A549 (cell line): ENCODE measurements at regions of chr15 and their contacts with region 1.

Region 1: GRCh38 chr15:66700802-66701421 is 1.1 kb upstream of the SMAD6 start:
- DNase-seq: peak; percentile 92 to 98
- ATAC-seq: peak; percentile 62 to 73
- H3K4me3 ChIP-seq: peak overlapping the region; percentile 90
- H3K27ac ChIP-seq: peak overlapping the region; percentile 95
- H3K4me1 ChIP-seq: peaks cover 35% of the 10 kb centered on the region
- CTCF ChIP-seq: no peak
- EP300 ChIP-seq: peak in 1 of 2 experiments; percentile 58; a peak in 1 of 5 replicates
- POLR2A ChIP-seq: peak; percentile 62
- RAD21 ChIP-seq: peak in 1 of 2 experiments; percentile 26; a peak in 2 of 5 replicates

Region 2: DNA sequence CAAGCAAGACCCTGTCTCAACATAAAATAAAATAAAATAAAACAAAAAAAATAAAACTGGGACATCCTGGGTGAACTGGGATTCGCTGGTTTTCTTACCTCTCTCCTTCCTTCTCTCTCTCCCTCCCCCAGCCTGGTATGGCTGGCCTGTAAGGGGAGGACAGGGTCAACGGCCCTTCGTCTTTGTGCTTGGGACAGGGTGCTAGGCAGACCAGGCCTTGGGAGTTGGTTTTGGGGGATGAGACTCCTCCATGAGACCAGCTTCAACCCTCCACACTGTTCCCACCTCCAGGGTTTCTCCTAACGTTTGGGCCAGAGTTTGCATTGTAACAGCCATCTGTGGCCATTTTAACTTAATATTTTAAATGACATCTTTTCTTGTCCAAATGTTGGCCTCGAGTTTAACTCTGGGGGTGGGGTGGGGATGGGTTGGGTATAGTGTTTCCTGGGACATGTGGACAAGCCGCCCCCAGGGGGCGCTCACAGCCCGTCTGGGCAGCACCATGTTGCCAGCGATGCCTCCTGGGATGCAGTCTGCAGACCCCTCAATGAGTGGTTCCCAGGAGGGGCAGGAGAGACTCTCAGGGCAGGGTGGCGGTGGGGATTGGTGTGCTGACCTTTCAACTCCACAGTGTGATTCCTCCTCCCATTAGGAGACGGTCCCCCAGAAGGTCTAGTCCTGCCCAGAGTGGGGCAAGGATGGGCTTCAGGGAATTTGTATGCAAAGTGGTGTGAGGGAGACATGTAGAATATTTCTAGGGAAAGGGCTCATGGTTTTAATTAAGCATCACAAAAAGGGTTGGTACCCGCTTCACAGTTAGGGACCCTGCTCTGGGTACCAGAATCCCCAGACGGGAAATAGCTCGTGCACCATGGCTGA is 97.4 kb before region 1 on chr15:
- CTCF ChIA-PET with region 1: interaction called, 14 read pairs
- POLR2A ChIA-PET with region 1: no interaction called
- DNase-seq: peak; percentile 61 to 86
- ATAC-seq: peak; percentile 80 to 97
- H3K4me3 ChIP-seq: no peak overlapping the region
- H3K27ac ChIP-seq: no peak overlapping the region
- H3K4me1 ChIP-seq: no peaks in the 10 kb centered on the region
- CTCF ChIP-seq: peak; percentile 95
- EP300 ChIP-seq: no peak
- POLR2A ChIP-seq: no peak
- RAD21 ChIP-seq: peak; percentile 92

Region 3: DNA sequence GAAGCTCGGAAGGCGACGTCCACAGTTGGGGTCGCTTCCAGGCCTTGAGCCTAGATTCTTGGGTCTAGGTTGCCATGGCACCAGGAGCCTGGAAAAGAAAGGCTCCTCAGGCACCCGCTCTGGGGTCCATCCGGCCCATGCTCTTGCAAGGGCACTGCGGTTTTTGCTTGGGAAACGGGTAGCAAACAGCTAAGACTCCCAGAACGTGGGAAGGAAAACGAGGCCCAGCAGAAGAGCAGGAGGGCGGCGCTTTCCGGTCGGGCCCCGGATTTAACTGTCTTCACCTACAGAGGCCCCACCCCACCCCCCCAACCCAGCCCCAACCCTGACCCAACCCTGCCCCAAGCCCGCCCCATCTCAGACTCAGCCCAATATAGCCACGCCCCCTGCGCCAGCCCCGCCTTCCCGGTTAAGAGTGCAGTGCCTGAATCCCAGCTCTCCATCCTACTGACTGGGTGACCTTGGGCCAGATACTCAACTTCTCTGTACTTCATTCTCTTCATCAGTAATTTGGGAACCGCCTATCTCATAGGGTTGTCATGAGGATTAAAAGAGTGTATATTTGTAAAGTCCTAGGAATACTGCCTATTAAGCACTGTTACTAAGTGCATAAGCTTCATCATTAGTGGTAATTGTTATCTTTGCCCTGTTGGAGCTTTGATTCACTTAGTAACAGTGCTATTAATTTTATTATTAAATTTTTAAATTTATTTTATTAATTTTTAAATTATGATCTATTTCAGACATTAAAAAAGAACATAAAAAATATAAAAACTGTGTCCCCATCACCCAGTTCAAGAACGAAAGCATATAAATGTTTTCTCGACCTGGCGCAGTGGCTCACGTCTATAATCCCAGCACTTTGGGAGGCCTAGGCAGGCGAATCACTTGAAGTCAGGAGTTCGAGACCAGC is 27.2 kb before region 1 on chr15:
- CTCF ChIA-PET with region 1: interaction called, 11 read pairs
- POLR2A ChIA-PET with region 1: no interaction called
- DNase-seq: peak in 1 of 2 experiments; percentile 58
- ATAC-seq: peak; percentile 44 to 84
- H3K4me3 ChIP-seq: no peak overlapping the region
- H3K27ac ChIP-seq: no peak overlapping the region
- H3K4me1 ChIP-seq: no peaks in the 10 kb centered on the region
- CTCF ChIP-seq: no peak
- EP300 ChIP-seq: no peak
- POLR2A ChIP-seq: no peak
- RAD21 ChIP-seq: no peak

Region 4: DNA sequence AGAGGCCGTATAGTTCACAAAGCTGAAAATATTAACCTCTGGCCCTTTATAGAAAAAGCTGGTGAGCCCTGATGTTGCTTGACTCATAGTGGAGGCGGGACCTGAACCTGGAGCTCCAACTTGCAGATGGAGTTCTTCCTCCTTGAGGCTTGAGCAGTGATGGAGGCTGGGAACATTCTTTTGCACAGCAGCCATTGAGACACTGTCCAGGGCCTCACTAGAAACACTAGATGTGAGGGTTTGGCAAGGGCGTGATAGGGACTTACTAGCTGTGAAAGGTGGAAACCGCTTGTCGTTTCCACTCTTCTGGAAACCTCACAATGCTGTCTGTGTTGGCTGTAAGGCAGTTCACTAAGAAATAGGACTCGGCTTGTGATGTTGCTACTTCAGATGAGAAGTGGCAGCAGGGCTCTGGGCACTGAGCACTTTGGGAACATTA is 13.7 kb after region 1 on chr15:
- CTCF ChIA-PET with region 1: interaction called, 182 read pairs
- POLR2A ChIA-PET with region 1: interaction called, 16 read pairs
- DNase-seq: no peak
- ATAC-seq: peak in 1 of 2 experiments; percentile 44; a peak in 3 of 6 replicates
- H3K4me3 ChIP-seq: no peak overlapping the region
- H3K27ac ChIP-seq: peak overlapping the region; percentile 31 to 65; a peak in 5 of 6 replicates
- H3K4me1 ChIP-seq: peaks cover 86% of the 10 kb centered on the region
- CTCF ChIP-seq: no peak
- EP300 ChIP-seq: no peak
- POLR2A ChIP-seq: no peak
- RAD21 ChIP-seq: no peak

Region 5: DNA sequence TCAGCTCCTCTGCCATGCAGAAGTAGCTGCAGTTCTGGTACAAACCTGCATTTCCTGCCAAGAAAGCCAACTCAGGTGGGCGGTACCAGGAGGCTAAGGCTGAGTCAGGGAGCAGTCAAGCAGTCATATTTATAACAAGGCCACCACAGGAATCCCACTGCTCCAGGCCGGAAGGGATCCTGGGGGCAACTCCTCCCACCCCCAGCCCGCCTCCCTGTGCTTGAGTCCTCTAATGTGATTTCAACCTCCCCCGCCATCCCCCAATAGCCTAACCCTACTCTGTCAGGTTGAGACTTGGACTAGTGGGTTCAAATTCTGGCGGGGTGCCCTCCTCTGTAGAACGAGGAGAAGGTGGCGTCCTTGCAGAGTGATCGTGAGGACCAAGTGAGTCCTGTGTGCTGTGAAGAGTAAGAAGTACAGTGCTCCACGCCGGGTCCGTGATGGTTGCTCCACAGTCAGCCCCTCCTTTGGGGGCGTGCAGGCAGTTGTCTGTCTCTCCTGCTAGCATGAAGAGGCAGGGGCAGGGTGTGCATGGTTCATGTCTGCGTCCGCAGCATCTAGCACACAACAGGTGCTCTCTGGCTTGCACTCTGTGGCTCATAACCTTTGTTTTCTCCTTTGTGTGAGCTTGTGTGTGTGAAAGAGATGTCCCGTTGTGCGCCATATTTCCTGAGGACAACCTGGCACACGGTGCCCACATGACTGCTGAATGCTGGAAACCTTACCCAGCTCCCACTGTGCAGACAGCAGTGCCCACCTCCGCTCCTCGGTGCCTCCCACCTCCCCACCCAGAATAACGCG is 79.5 kb after region 1 on chr15:
- CTCF ChIA-PET with region 1: interaction called, 779 read pairs
- POLR2A ChIA-PET with region 1: interaction called, 94 read pairs
- DNase-seq: peak; percentile 44 to 61
- ATAC-seq: peak; percentile 35 to 57; a peak in 4 of 6 replicates
- H3K4me3 ChIP-seq: no peak overlapping the region
- H3K27ac ChIP-seq: peak overlapping the region; percentile 60 to 94
- H3K4me1 ChIP-seq: peaks cover 55% of the 10 kb centered on the region
- CTCF ChIP-seq: no peak
- EP300 ChIP-seq: no peak
- POLR2A ChIP-seq: no peak
- RAD21 ChIP-seq: no peak

Region 6: GRCh38 chr15:66862878-66863335 is 162.0 kb after region 1 on chr15:
- CTCF ChIA-PET with region 1: interaction called, 10 read pairs
- POLR2A ChIA-PET with region 1: no interaction called
- DNase-seq: peak; percentile 87 to 90
- ATAC-seq: peak; percentile 85 to 97
- H3K4me3 ChIP-seq: no peak overlapping the region
- H3K27ac ChIP-seq: peak overlapping the region; percentile 1 to 66; a peak in 4 of 6 replicates
- H3K4me1 ChIP-seq: peaks cover 17% of the 10 kb centered on the region
- CTCF ChIP-seq: peak; percentile 98
- EP300 ChIP-seq: no peak
- POLR2A ChIP-seq: no peak
- RAD21 ChIP-seq: peak; percentile 83 to 87

Region 7: GRCh38 chr15:66894986-66895780 is 194.3 kb after region 1 on chr15:
- CTCF ChIA-PET with region 1: no interaction called
- POLR2A ChIA-PET with region 1: no interaction called
- DNase-seq: no peak
- ATAC-seq: no peak
- H3K4me3 ChIP-seq: no peak overlapping the region
- H3K27ac ChIP-seq: peak overlapping the region in 1 of 2 experiments; percentile 43; a peak in 4 of 6 replicates
- H3K4me1 ChIP-seq: peaks cover 46% of the 10 kb centered on the region
- CTCF ChIP-seq: no peak
- EP300 ChIP-seq: no peak
- POLR2A ChIP-seq: no peak
- RAD21 ChIP-seq: no peak